ENCODE measurements at regions of chr12 and their contacts with region 1.

Region 1: DNA sequence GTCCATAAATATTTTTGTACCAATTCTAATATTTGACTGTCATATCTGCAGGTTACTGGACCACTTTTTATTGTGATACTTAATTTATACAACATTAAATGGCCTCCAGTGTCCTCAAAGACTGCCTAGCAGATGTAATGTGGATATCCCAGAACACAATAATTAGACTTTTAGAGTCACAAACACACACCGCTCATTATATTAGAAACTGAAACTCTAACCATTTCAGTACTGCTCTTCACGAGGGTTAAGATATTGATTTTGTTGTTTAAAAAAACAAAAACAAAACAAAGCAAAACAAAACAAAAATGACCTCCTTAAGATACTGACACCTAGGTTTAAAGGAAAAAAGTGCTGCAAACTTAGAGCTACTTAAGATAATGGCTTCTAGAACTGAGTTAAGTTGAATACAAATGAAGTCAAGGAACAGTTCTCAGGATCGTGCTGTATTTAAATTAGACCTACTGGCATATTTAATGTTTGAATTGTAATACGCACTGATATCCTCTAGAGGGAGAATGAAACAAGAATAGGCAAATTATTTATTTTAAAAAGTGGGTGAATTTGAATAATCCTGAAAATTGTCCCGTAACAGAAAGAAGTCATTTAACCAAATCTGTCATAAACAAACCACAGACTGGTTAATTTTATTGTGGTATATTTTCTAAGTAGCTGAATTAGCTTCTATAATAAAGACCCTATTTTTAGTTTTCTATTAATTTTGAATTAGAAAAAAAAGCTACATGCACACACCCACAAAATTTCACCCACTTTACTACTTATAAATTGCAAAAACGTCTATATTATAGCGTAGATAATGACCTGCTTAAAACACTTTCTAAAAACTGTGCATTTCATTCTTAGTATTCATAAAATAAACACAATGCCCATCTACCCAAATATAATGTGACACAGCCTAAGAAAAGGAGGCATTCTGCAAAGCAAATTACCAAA is 395.2 kb upstream of the DCN start:
- DNase-seq: no peak
- H3K4me3 Mint-ChIP-seq: peak overlapping the region; percentile 54
- H3K27ac Mint-ChIP-seq: peak overlapping the region; percentile 50
- H3K4me1 Mint-ChIP-seq: no peaks in the 10 kb centered on the region
- H3K27me3 Mint-ChIP-seq: no peaks in the 10 kb centered on the region
- CTCF ChIP-seq: peak; percentile 43

Region 2: GRCh38 chr12:91413581-91414546 is 164.0 kb before region 1 on chr12:
- CTCF ChIA-PET with region 1: no interaction called
- intact Hi-C with region 1: loop called (anchors 5 kb)
- DNase-seq: peak; percentile 32
- H3K4me3 Mint-ChIP-seq: no peak overlapping the region
- H3K27ac Mint-ChIP-seq: peak overlapping the region; percentile 58
- H3K4me1 Mint-ChIP-seq: peaks cover 6% of the 10 kb centered on the region
- H3K27me3 Mint-ChIP-seq: no peaks in the 10 kb centered on the region
- CTCF ChIP-seq: no peak

Region 3: GRCh38 chr12:92649511-92650227 is 1071.8 kb after region 1 on chr12:
- CTCF ChIA-PET with region 1: no interaction called
- intact Hi-C with region 1: loop called (anchors 10 kb)
- DNase-seq: peak; percentile 78
- H3K4me3 Mint-ChIP-seq: peak overlapping the region; percentile 54
- H3K27ac Mint-ChIP-seq: peak overlapping the region; percentile 71
- H3K4me1 Mint-ChIP-seq: peaks cover 47% of the 10 kb centered on the region
- H3K27me3 Mint-ChIP-seq: no peaks in the 10 kb centered on the region
- CTCF ChIP-seq: peak; percentile 63